ENCODE measurements at regions of chr9 and their contacts with region 1.

Region 1: GRCh38 chr9:75088260-75088905 is at the start of gene OSTF1:
- DNase-seq: peak; percentile 85 to 99 (median 93)

Region 2: DNA sequence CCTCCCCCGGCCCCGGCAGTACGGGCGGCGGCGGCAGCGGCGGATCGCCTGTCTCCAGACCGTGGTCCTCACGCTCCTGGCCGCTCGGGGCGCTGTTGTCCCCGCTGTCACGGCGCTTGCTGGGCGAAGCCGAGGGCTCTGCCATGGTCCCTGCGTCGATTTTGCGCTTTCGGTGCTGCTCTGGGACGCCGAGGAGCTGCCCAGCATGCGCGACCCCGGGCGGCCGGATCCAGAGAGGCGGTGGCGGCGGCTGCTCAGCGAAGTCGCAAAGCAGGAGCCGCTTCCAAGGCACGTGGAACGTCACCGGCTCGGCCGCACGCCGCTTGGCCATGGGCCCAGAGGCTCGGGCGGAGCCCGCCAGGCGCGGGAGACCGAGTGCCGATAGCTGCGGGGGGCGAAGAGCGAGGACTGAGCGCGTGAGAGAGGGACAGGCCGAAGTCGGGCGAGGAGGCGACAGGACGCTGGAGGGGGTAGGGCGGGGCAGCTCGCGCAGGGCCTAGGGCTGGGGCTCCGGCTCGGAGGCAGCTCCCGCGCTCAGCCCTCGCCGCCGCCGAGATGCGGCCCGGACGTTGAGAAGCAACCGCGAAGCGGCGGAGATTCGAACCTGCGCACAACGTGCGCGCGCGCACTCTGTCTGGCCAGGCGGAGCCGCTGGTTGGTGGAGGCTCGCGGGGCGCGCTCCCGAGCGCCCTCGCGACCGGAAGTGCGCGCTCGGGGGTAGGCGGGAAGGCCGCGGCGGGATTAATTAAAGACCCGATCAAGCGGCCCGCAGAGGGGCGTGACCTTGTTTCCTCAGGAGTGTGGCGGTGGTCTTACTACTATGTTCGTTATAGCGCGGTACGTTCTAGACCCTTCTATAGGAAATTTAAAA is 135.9 kb before region 1 on chr9 and contains the start of gene C9orf40:
- intact Hi-C with region 1: loop called (anchors 5 kb)
- DNase-seq: peak; percentile 82 to 98 (median 90)

Region 3: GRCh38 chr9:75027187-75028107 is 60.9 kb before region 1 on chr9:
- intact Hi-C with region 1: loop called (anchors 1 kb)
- DNase-seq: peak in 9 of 10 donors; percentile 19 to 88 (median 41)

Region 4: GRCh38 chr9:75128535-75128934 is 40.2 kb after region 1 on chr9:
- intact Hi-C with region 1: loop called (anchors 5 kb)
- DNase-seq: no peak

Region 5: DNA sequence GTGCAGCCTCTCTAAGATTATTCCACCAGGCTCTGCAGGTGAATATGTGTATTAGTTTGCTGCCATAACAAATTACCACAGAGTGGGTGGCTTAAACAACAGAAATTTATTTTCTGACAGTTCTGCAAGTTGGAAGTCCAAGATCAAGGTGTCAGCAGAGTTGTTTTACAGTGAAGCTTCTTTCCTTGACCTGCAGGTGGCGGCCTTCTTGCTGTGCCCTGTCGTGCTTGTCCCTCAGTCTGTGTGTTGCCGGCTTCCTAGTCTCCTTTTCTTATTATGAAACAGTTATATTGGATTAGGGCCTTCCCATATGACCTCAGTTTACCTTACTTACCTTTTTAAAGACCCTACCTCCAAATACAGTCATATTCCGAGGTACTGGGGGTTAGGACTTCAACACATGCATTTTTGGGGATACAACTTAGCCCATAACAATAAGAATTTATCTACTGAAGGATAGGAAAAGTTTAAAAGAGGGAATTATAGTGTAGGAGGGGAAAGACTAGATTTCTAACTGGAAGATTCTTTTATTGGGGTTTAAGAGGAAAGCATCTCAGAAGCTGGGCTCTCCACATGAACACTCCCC is 97.3 kb after region 1 on chr9:
- intact Hi-C with region 1: loop called (anchors 5 kb)
- DNase-seq: peak in 5 of 10 donors; percentile 21 to 82 (median 28)

Region 6: DNA sequence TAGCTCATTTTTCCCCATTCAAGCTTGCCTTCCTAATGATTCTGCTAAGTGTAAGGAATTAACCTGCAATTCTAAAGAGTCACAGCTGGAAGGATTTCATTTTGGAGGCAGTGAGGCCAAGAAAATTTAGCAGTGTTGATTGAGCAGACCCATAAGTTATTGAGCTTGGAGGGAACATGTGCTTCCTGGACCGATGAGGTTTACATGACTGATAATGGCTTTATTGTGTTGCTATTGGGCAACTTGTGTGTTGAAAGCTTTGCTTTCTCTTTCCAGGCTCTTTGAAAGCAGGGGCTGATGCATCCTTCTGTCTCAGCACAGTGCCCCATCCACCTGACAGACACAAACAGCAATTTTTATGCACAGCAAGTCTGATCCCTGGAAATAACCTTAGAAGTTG is 403.1 kb after region 1 on chr9:
- intact Hi-C with region 1: no loop called
- DNase-seq: no peak

Region 7: DNA sequence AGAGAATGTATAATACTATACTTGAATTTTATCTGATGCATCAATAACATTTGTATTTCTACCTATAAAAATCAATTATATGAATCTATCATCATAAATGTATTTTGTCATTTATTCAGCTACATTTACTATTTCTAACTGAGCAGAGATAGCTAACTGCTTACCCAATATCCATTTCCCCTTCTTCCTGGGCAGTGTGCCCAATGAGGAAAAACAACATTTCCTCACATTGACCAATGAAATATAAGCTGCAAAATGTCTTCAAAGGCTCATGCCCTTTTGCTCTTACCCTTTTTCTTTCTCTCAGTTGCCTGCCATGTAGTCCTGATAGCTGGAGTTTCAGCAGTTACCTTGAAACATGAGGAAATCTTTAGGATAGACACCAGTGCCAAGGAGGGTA is 416.3 kb after region 1 on chr9:
- intact Hi-C with region 1: no loop called
- DNase-seq: no peak

Region 8: GRCh38 chr9:76393963-76394679 is 1305.7 kb after region 1 on chr9 and contains the start of gene RFK:
- intact Hi-C with region 1: loop called (anchors 10 kb)
- DNase-seq: peak; percentile 86 to 98 (median 94)